ENCODE measurements at regions of chr6 and their contacts with region 1.

Region 1: DNA sequence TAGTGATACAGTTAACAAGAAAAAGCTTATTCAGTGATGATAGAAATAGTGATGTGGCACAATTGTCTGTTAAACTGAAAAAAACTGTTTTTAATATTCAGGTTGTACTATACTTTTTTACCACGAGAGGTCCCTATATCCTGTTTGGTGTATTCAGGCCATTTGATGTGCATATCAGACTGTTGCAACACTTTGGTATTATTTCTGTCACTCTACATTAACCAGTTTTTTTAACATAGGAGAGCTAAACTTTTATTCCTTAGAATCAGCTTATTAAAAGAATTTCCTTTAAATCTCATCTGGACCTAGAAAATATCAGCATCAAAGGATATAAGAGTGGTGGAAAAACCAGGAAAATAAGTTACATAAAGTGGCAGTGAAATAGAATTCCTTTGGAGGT is 36.8 kb downstream of the TSPYL4 start:
- DNase-seq: no peak
- H3K4me3 ChIP-seq: no peak overlapping the region
- H3K27ac ChIP-seq: no peak overlapping the region
- H3K27me3 ChIP-seq: no peaks in the 10 kb centered on the region
- CTCF ChIP-seq: peak; percentile 68

Region 2: GRCh38 chr6:114906096-114906495 is 1311.0 kb before region 1 on chr6:
- CTCF ChIA-PET with region 1: no interaction called
- POLR2A ChIA-PET with region 1: no interaction called
- DNase-seq: no peak
- H3K4me3 ChIP-seq: no peak overlapping the region
- H3K27ac ChIP-seq: no peak overlapping the region
- H3K27me3 ChIP-seq: no peaks in the 10 kb centered on the region
- CTCF ChIP-seq: no peak

Region 3: GRCh38 chr6:116200619-116201249 is 16.3 kb before region 1 on chr6:
- CTCF ChIA-PET with region 1: interaction called, 58 read pairs
- POLR2A ChIA-PET with region 1: no interaction called
- DNase-seq: peak; percentile 58
- H3K4me3 ChIP-seq: no peak overlapping the region
- H3K27ac ChIP-seq: no peak overlapping the region
- H3K27me3 ChIP-seq: no peaks in the 10 kb centered on the region
- CTCF ChIP-seq: no peak

Region 4: DNA sequence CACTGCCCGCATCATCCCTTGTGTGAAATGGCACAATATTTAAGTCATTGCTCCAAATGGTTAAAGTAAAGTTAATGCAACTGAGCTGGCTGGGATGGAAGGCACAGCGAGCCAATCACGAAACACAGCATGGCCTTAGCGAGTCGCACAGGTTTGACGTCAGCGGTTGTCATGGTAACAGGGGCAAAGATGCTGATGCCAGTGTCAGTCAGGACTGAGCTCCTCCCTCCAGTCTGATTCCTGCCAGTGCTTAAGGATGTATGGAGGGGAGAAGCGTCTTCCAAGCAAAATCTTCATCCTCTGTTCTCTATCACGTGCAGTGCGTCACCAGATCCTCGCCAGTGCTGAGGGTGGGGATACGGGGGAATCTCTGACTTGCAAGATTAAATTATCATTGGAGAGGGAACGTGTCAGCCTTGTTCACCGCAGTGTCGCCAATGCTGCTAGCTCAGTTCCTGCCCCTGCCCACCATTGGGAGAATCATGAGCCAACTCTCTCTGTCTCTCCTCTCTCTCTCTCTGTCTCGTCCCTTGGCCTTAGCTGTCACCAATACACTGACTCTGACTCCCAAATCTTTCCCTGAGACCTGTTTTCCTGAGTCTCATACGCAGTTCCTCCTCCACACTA is 12.3 kb after region 1 on chr6:
- CTCF ChIA-PET with region 1: interaction called, 103 read pairs
- POLR2A ChIA-PET with region 1: no interaction called
- DNase-seq: peak; percentile 81
- H3K4me3 ChIP-seq: peak overlapping the region; percentile 48
- H3K27ac ChIP-seq: no peak overlapping the region
- H3K27me3 ChIP-seq: no peaks in the 10 kb centered on the region
- CTCF ChIP-seq: no peak

Region 5: DNA sequence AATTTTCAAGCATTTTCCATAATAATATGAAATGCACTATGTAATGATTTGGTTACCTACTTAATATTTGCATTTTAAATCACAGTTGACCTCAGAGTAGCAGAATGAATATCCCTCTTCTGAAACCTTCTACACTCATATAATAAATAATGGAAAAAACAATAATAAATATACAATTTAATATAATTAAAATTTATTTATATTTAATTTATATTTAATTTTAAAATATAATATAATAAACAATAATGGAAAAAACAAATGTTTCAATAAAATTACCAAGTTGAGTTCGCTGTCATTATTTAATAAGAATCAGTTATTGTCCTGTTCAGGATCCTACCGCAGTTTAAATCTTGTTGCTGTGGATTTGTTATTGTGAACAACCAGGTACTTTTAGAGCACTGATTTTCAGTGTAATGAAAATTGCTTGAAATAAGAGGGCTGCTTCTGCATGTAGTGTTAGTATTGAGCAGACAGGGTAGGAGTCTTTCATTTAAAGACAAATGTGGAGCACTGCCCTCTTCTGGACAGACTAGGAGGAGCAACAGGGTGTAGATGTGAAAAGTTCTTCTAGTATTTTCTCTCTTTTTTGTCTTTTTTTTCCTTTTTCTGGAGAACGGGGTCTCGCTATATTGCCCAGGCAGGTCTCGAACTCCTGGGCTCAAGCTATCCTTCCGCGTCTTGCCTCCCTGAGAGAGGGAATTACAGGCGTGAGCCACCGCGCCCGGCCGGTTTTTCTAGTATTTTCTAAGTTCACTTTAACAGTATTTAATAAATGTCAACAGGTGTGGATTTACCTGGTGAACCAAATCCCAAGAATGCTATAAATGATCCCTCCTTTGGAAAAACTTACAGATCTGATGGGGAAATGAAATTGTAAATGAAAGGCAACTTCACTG is 314.9 kb after region 1 on chr6:
- CTCF ChIA-PET with region 1: interaction called, 10 read pairs
- POLR2A ChIA-PET with region 1: no interaction called
- DNase-seq: peak; percentile 52
- H3K4me3 ChIP-seq: no peak overlapping the region
- H3K27ac ChIP-seq: no peak overlapping the region
- H3K27me3 ChIP-seq: no peaks in the 10 kb centered on the region
- CTCF ChIP-seq: peak; percentile 82

Region 6: GRCh38 chr6:116570856-116571682 is 354.0 kb after region 1 on chr6 and contains the start of gene RWDD1:
- CTCF ChIA-PET with region 1: interaction called, 24 read pairs
- POLR2A ChIA-PET with region 1: no interaction called
- DNase-seq: peak; percentile 99
- H3K4me3 ChIP-seq: peak within 1 kb of the TSS; percentile 95
- H3K27ac ChIP-seq: peak within 1 kb of the TSS; percentile 79
- H3K27me3 ChIP-seq: no peaks in the 10 kb centered on the region
- CTCF ChIP-seq: 0 out of 2 replicates have a peak, but pooled peaks have one; percentile 3
- polyA plus RNA-seq, gene RWDD1: 43.0 and 56.9 TPM in 2 replicates

Region 7: GRCh38 chr6:116847227-116847626 is 630.2 kb after region 1 on chr6:
- CTCF ChIA-PET with region 1: interaction called, 15 read pairs
- POLR2A ChIA-PET with region 1: no interaction called
- DNase-seq: no peak
- H3K4me3 ChIP-seq: no peak overlapping the region
- H3K27ac ChIP-seq: no peak overlapping the region
- H3K27me3 ChIP-seq: no peaks in the 10 kb centered on the region
- CTCF ChIP-seq: peak; percentile 32; the same call in 1 of the 2 replicates